Heart left ventricle (tissue), 16 donors: ENCODE measurements at regions of chr15 and their contacts with region 1.

Region 1: GRCh38 chr15:75647370-75648155 is at the start of gene SNX33:
- DNase-seq: peak; percentile 88 to 91 (median 89)
- ATAC-seq: peak; percentile 39 to 86 (median 80)
- H3K4me3 ChIP-seq: peak within 1 kb of the TSS; percentile 63 to 97 (median 86)
- H3K27ac ChIP-seq: peak within 1 kb of the TSS; percentile 83 to 99 (median 96)
- H3K4me1 ChIP-seq: peaks cover 8 to 58% (median 51%) of the 10 kb centered on the region in 12 donors
- H3K27me3 ChIP-seq: no peaks in the 10 kb centered on the region
- CTCF ChIP-seq: peak; percentile 30 to 66 (median 50)
- POLR2A ChIP-seq: peak in 1 of 2 donors; percentile 68
- total RNA-seq, gene SNX33: 8.3 to 20.9 (median 11.6) TPM

Region 2: GRCh38 chr15:75666823-75667501 is 19.4 kb after region 1 on chr15:
- intact Hi-C with region 1: loop called in 2 of 10 experiments (anchors 2 kb)
- DNase-seq: peak; percentile 56 to 85 (median 80)
- ATAC-seq: peak; percentile 39 to 90 (median 76)
- H3K4me3 ChIP-seq: no peak overlapping the region
- H3K27ac ChIP-seq: peak overlapping the region; percentile 1 to 80 (median 70)
- H3K4me1 ChIP-seq: peaks cover 13 to 40% (median 19%) of the 10 kb centered on the region in 12 donors
- H3K27me3 ChIP-seq: no peaks in the 10 kb centered on the region
- CTCF ChIP-seq: no peak
- POLR2A ChIP-seq: peak in 1 of 2 donors; percentile 21